Heart left ventricle (tissue), 16 donors: ENCODE measurements at regions of chr11 and their contacts with region 1.

Region 1: DNA sequence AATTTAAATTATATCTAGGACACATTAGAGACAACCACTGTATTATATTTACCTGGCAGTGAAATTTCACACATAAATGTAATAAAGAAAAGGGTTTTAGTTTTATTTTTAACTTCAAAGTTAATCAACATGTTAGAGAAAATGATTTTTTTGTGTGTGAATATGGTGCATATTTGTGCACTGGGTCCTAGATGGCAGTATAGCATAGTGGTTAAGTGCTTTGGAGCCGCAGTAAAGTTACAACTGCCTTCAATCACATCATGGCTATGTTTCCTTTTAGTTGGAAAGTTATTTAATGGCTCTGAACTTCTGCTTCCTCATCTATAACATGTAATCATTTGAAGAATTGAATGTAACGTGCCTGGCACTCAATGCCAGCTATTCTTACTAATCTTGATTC is 108.9 kb upstream of the DDI1 start:
- DNase-seq: no peak
- ATAC-seq: peak in 1 of 4 donors; percentile 56
- H3K4me3 ChIP-seq: no peak overlapping the region
- H3K27ac ChIP-seq: no peak overlapping the region
- H3K4me1 ChIP-seq: peaks cover 0 to 16% (median 4%) of the 10 kb centered on the region in 12 donors
- H3K27me3 ChIP-seq: no peaks in the 10 kb centered on the region
- CTCF ChIP-seq: peak in 9 of 12 donors; percentile 17 to 50 (median 33)
- POLR2A ChIP-seq: no peak

Region 2: GRCh38 chr11:103682318-103683184 is 245.0 kb before region 1 on chr11:
- intact Hi-C with region 1: loop called in 4 of 10 experiments (anchors 10 kb)
- DNase-seq: peak in 4 of 5 donors; percentile 54 to 66 (median 58)
- ATAC-seq: peak; percentile 90 to 98 (median 96)
- H3K4me3 ChIP-seq: peak overlapping the region in 1 of 12 donors; percentile 15
- H3K27ac ChIP-seq: peak overlapping the region in 7 of 12 donors; percentile 3 to 60 (median 49)
- H3K4me1 ChIP-seq: peaks cover 0 to 15% (median 6%) of the 10 kb centered on the region in 12 donors
- H3K27me3 ChIP-seq: no peaks in the 10 kb centered on the region
- CTCF ChIP-seq: peak; percentile 65 to 92 (median 84)
- POLR2A ChIP-seq: no peak

Region 3: DNA sequence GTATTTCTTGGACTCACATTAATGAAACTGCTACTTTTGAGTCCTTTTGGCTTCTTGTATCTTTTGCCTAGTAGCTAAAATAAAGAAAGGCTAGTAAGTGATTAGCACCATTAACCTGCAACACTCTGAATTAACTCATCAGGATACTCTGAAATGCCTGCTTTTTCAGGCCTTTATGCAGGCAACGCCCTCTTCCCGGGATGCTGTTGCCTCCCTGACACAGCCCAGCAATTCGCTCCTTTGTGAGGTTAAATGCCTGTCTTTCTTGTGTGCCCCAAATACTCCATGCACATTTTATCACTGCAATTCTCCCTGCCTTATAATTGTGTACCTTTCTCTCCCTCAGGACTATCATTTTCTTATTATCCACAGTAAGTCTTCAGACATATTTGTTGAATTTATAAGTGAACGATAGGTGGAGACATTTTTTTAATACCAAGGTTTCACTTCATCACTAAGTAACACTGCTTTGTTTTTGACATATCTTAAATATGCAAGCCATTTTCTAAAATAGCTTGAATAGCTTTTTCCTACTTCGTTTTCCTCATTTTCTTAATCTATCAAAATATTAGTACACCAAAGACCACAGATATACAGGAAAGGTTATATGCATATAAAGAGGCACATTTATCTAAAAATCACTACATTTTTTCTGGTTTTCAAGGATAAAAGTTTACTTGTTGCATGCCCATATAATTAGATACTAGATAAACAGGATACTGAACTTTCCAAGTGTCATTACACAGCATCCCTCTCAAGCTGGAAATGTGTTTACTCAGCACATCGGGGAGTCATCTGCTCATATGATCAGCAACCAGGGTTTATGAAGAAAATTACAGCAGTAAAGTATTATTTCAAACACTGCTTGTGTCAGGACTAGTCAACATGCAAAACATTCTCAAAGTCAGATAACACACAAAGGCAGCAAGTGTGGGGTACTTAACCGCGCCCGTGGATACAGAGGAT is 60.4 kb after region 1 on chr11:
- intact Hi-C with region 1: no loop called
- DNase-seq: no peak
- ATAC-seq: no peak
- H3K4me3 ChIP-seq: no peak overlapping the region
- H3K27ac ChIP-seq: no peak overlapping the region
- H3K4me1 ChIP-seq: no peaks in the 10 kb centered on the region
- H3K27me3 ChIP-seq: no peaks in the 10 kb centered on the region
- CTCF ChIP-seq: no peak
- POLR2A ChIP-seq: no peak

Region 4: DNA sequence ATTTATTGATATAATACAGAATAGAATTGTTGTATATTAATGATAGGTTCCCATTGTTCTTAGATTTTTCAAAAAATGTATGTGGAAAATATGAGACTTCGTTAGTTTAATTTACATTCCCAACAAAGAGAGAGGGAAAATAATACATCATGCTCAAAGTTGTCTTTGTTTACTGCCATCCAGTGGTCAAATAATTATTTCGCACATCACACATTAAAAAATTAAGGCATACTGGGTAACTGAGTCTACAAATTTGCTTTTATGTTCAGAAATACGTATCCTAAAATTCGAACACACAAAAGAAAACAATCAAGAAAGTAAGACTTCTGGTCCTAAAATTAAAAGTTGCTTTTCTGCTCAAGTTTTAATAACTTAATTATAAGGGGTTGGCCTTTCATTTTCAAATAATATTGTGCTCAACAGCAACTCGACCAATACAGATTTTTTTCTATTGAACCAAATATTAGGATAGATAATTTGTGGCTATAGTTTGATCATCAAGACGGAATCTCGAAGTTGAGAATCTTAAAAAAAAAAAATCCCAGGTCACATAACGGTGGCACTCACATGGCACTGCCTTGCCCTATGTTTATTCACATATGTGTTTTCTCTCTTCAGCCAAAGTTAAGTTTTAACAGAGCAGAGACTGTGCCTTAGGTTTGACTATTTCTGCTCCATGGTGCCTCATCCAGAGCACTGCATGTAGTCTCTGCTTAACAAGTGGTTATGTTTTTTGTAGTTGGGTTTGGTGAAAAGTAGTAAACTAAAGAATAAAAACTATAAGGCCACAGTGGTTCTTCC is 224.1 kb after region 1 on chr11:
- intact Hi-C with region 1: loop called in 3 of 10 experiments (anchors 5 to 10 kb)
- DNase-seq: no peak
- ATAC-seq: no peak
- H3K4me3 ChIP-seq: no peak overlapping the region
- H3K27ac ChIP-seq: no peak overlapping the region
- H3K4me1 ChIP-seq: peaks cover 0 to 7% (median 0%) of the 10 kb centered on the region in 12 donors
- H3K27me3 ChIP-seq: no peaks in the 10 kb centered on the region
- CTCF ChIP-seq: peak; percentile 17 to 56 (median 42)
- POLR2A ChIP-seq: no peak

Region 5: GRCh38 chr11:104164028-104164520 is 236.5 kb after region 1 on chr11 and contains the start of gene PDGFD:
- intact Hi-C with region 1: loop called in 3 of 10 experiments (anchors 10 kb)
- DNase-seq: peak; percentile 72 to 81 (median 73)
- ATAC-seq: peak; percentile 81 to 97 (median 93)
- H3K4me3 ChIP-seq: peak within 1 kb of the TSS; percentile 36 to 80 (median 65)
- H3K27ac ChIP-seq: peak within 1 kb of the TSS in 11 of 12 donors; percentile 39 to 74 (median 65)
- H3K4me1 ChIP-seq: peaks cover 0 to 22% (median 2%) of the 10 kb centered on the region in 12 donors
- H3K27me3 ChIP-seq: no peaks in the 10 kb centered on the region
- CTCF ChIP-seq: peak; percentile 26 to 71 (median 48)
- POLR2A ChIP-seq: no peak
- total RNA-seq, gene PDGFD: 8.0 to 24.6 (median 17.3) TPM